ENCODE measurements at regions of chr2 and their contacts with region 1.

Region 1: DNA sequence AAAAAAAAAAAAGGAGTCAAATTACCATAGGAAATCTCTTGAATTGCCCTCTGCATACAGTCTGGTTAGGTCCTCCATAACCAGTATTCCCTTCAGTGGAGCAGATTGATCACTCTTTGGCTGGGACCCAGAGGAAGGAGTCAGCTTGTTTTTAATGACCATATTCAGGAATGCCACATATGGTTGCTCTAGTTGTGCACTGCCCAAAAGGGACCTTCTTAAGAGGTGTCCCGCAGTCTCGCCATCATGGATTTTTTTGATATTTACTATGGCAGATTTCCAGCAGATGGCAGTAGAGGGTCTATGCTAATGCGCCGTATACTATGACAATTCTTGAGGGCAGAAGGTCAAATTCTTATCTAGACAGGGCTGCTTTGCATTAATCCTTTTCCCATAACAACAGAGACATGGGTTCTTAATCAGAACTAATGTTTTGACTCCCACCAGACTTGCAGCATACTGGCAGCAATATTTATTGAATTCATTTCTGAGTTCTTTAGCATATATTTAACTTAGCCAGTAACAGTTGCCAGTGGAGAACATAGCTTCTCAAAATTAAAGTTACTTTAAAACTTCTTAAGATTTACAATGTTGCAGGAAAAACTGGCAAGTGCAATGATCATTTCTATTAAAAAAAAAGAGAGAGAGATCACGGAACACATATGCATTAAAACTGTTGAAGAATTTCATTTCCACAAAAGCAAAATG is 31.8 kb upstream of the INPP4A start:
- DNase-seq: peak in 2 of 5 donors; percentile 32 to 40
- ATAC-seq: peak; percentile 75 to 91 (median 88)
- H3K4me3 ChIP-seq: no peak overlapping the region
- H3K27ac ChIP-seq: no peak overlapping the region
- H3K4me1 ChIP-seq: peaks cover 0 to 5% (median 0%) of the 10 kb centered on the region in 12 donors
- H3K27me3 ChIP-seq: no peaks in the 10 kb centered on the region
- CTCF ChIP-seq: peak; percentile 65 to 90 (median 80)
- POLR2A ChIP-seq: no peak

Region 2: GRCh38 chr2:98465456-98466226 is 52.7 kb after region 1 on chr2:
- intact Hi-C with region 1: no loop called
- DNase-seq: peak; percentile 75 to 91 (median 81)
- ATAC-seq: peak; percentile 72 to 84 (median 76)
- H3K4me3 ChIP-seq: peak overlapping the region in 1 of 12 donors; percentile 34
- H3K27ac ChIP-seq: peak overlapping the region; percentile 21 to 96 (median 66)
- H3K4me1 ChIP-seq: peaks cover 3 to 99% (median 41%) of the 10 kb centered on the region in 12 donors
- H3K27me3 ChIP-seq: no peaks in the 10 kb centered on the region
- CTCF ChIP-seq: no peak
- POLR2A ChIP-seq: no peak

Region 3: GRCh38 chr2:98518090-98518489 is 105.2 kb after region 1 on chr2:
- intact Hi-C with region 1: loop called (anchors 1 to 10 kb)
- DNase-seq: no peak
- ATAC-seq: peak in 3 of 4 donors; percentile 56 to 69 (median 61)
- H3K4me3 ChIP-seq: no peak overlapping the region
- H3K27ac ChIP-seq: peak overlapping the region in 1 of 12 donors; percentile 44
- H3K4me1 ChIP-seq: peaks cover 0 to 47% (median 17%) of the 10 kb centered on the region in 12 donors
- H3K27me3 ChIP-seq: no peaks in the 10 kb centered on the region
- CTCF ChIP-seq: peak in 11 of 12 donors; percentile 27 to 61 (median 54)
- POLR2A ChIP-seq: no peak

Region 4: DNA sequence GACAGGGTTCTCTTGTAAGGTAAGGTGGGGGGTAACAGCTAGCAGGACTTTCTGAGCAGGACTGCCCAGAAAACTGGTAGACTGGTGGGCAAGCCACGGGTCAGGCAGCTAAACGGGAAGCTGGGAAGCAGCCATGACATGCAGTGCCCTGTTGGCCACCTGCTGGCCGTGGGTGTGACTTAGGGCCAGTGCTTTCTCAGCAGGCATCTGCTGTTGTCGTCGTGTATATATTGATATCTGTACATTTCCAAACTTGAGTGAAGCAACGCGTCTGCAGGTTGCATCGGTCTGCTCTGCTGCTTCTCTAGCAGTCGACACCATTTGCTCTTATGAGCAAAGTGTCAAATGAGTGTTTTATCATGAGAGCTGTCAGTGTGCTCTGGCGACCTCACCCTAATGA is 164.4 kb after region 1 on chr2:
- intact Hi-C with region 1: loop called in 6 of 10 experiments (anchors 5 to 10 kb)
- DNase-seq: no peak
- ATAC-seq: peak in 3 of 4 donors; percentile 56 to 71 (median 57)
- H3K4me3 ChIP-seq: no peak overlapping the region
- H3K27ac ChIP-seq: no peak overlapping the region
- H3K4me1 ChIP-seq: peaks cover 0 to 8% (median 0%) of the 10 kb centered on the region in 12 donors
- H3K27me3 ChIP-seq: no peaks in the 10 kb centered on the region
- CTCF ChIP-seq: peak in 11 of 12 donors; percentile 12 to 53 (median 34)
- POLR2A ChIP-seq: no peak

Region 5: GRCh38 chr2:98608116-98608999 is 195.5 kb after region 1 on chr2 and contains the starts of genes COA5 and UNC50:
- intact Hi-C with region 1: loop called in 9 of 10 experiments (anchors 2 to 5 kb)
- DNase-seq: peak; percentile 93 to 95 (median 94)
- ATAC-seq: peak; percentile 94 to 97 (median 96)
- H3K4me3 ChIP-seq: peak within 1 kb of the TSS; percentile 63 to 99 (median 87)
- H3K27ac ChIP-seq: peak within 1 kb of the TSS; percentile 89 to 100 (median 96)
- H3K4me1 ChIP-seq: peaks cover 12 to 66% (median 49%) of the 10 kb centered on the region in 12 donors
- H3K27me3 ChIP-seq: no peaks in the 10 kb centered on the region
- CTCF ChIP-seq: peak in 3 of 12 donors; percentile 23 to 27 (median 25)
- POLR2A ChIP-seq: peak in 1 of 2 donors; percentile 75
- total RNA-seq, gene COA5: 19.6 to 33.5 (median 27.7) TPM
- total RNA-seq, gene UNC50: 22.3 to 31.4 (median 25.6) TPM

Region 6: GRCh38 chr2:98835831-98836385 is 423.0 kb after region 1 on chr2:
- intact Hi-C with region 1: loop called in 7 of 10 experiments (anchors 5 to 10 kb)
- DNase-seq: no peak
- ATAC-seq: no peak
- H3K4me3 ChIP-seq: no peak overlapping the region
- H3K27ac ChIP-seq: peak overlapping the region in 1 of 12 donors; percentile 34
- H3K4me1 ChIP-seq: peaks cover 0 to 24% (median 11%) of the 10 kb centered on the region in 12 donors
- H3K27me3 ChIP-seq: no peaks in the 10 kb centered on the region
- CTCF ChIP-seq: no peak
- POLR2A ChIP-seq: no peak